Endothelial cell of umbilical vein (primary cell): ENCODE measurements at regions of chr18 and their contacts with region 1.

Region 1: GRCh38 chr18:25921677-25922421 is 168.6 kb downstream of the SS18 start:
- DNase-seq: peak; percentile 35
- H3K4me3 ChIP-seq: no peak overlapping the region
- H3K27ac ChIP-seq: no peak overlapping the region
- H3K4me1 ChIP-seq: no peaks in the 10 kb centered on the region
- H3K27me3 ChIP-seq: peaks cover under 1 to 2% of the 10 kb centered on the region in 2 experiments
- CTCF ChIP-seq: peak; percentile 53 to 64
- POLR2A ChIP-seq: no peak

Region 2: DNA sequence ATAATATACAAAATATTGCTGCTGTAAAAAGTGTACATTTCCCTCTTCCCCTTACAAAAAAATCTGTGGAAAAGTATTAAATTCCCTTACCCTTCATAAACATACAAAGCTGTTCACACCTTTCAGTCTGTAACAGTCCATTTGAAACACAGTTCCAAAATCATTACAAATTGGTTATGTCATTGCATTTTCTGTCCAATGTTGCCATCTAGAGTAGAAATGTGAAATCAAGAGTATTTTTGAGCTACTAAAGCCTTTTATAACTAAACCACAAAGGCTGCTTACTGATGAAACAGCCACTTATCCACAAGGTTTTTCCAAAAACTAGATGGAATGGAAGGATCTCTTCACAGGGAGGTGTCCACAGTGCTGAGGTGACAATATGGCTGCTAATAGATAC is 96.1 kb after region 1 on chr18:
- CTCF ChIA-PET with region 1: interaction called, 12 read pairs
- POLR2A ChIA-PET with region 1: no interaction called
- dilution Hi-C with region 1: no loop called
- intact Hi-C with region 1: no loop called
- DNase-seq: peak; percentile 25
- H3K4me3 ChIP-seq: no peak overlapping the region
- H3K27ac ChIP-seq: no peak overlapping the region
- H3K4me1 ChIP-seq: no peaks in the 10 kb centered on the region
- H3K27me3 ChIP-seq: no peaks in the 10 kb centered on the region
- CTCF ChIP-seq: no peak
- POLR2A ChIP-seq: no peak

Region 3: GRCh38 chr18:26127786-26128185 is 205.9 kb after region 1 on chr18:
- CTCF ChIA-PET with region 1: interaction called, 14 read pairs
- POLR2A ChIA-PET with region 1: no interaction called
- dilution Hi-C with region 1: no loop called
- intact Hi-C with region 1: no loop called
- DNase-seq: no peak
- H3K4me3 ChIP-seq: no peak overlapping the region
- H3K27ac ChIP-seq: no peak overlapping the region
- H3K4me1 ChIP-seq: no peaks in the 10 kb centered on the region
- H3K27me3 ChIP-seq: no peaks in the 10 kb centered on the region
- CTCF ChIP-seq: no peak
- POLR2A ChIP-seq: no peak

Region 4: GRCh38 chr18:26159353-26159752 is 237.5 kb after region 1 on chr18:
- CTCF ChIA-PET with region 1: interaction called, 19 read pairs
- POLR2A ChIA-PET with region 1: no interaction called
- dilution Hi-C with region 1: no loop called
- intact Hi-C with region 1: loop called (anchors 1 kb)
- DNase-seq: peak; percentile 6
- H3K4me3 ChIP-seq: no peak overlapping the region
- H3K27ac ChIP-seq: no peak overlapping the region
- H3K4me1 ChIP-seq: no peaks in the 10 kb centered on the region
- H3K27me3 ChIP-seq: peaks cover 0 to 3% of the 10 kb centered on the region in 2 experiments
- CTCF ChIP-seq: no peak
- POLR2A ChIP-seq: no peak

Region 5: DNA sequence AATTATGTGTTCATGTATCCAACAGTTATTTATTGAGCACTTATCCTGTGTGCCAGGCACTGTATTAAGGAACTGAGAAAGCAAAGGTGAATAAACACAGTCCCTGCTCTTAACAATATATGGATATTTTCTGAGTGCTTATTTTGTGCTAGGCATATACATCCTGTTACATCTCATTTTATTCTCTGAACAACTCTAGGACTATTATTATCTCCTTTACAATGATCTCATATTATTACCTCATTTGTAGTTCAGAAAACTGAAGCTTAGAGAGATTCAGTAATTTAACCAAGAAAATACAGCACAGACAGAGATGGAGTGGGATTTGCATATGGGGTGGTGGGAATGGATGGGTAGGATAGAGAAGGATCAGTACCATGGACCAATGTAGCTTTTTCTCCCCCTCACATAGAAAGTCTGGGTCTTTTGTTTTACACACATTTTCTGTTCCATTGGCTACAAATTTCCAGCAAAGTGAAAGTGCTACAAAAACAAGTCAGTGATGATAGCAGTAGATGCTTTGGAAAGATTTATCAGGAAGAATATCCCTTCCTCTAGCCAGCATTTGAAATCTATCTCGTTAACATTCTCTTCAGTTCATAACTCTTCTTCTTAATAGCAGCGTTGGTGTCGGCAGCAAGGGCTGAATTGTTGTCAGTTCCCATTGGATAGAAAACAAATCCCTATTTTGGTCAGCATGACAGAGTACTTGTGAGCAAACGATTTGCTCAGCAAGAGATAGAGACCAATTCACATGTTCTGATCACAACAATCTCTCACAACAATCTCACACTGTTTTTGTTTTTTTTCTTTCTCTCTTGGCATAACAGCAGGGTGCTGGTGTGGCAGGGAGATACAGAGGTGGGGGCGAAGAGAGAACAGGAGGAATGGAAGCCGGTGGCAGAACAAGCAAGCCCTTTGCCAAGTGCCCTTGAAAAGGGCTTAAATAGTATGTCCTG is 728.7 kb after region 1 on chr18:
- CTCF ChIA-PET with region 1: interaction called, 3 read pairs
- POLR2A ChIA-PET with region 1: no interaction called
- dilution Hi-C with region 1: no loop called
- intact Hi-C with region 1: loop called (anchors 5 kb)
- DNase-seq: no peak
- H3K4me3 ChIP-seq: no peak overlapping the region
- H3K27ac ChIP-seq: no peak overlapping the region
- H3K4me1 ChIP-seq: no peaks in the 10 kb centered on the region
- H3K27me3 ChIP-seq: peaks cover 40 to 51% of the 10 kb centered on the region in 2 experiments
- CTCF ChIP-seq: no peak
- POLR2A ChIP-seq: no peak